CD8-positive, alpha-beta T cell (primary cell): ENCODE measurements at regions of chr4 and their contacts with region 1.

Region 1: DNA sequence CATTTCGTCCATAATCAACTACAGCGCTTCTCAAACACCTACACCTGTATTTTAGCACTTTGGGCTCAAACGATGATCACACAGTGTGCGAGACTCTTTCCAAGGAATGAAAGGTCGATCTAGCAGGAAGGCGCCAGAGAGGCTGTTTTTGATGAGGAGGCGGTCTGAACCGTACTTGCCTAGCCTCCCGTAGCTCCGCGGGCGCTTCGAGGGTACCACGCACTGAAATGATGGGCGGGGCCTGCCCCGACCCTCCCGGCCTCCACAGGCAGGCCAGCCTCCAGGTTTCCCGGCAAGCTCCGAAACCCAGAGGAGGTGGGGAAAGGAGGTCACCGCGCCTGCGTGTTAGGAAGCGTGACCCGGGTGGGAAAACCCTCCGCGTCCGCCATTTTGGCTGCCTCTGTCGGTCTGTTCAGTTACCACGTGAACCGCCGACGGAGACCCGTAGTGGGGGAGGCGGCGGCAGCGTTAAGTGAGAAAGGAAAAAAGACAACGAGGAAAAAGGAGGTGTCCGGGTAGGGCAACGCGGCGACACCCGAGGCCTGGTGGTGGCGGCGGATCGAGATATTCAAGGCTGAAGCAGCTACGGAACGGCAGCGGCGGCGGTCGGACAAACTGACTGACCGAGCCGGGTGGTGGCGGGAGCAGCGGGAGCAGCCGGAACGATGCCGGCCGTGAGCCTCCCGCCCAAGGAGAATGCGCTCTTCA is at the start of gene NAA15:
- DNase-seq: peak; percentile 94 to 99 (median 97)
- ATAC-seq: peak; percentile 89
- H3K4me3 ChIP-seq: peak within 1 kb of the TSS; percentile 90 to 94
- H3K4me3 Mint-ChIP-seq: peak within 1 kb of the TSS; percentile 99
- H3K27ac ChIP-seq: peak within 1 kb of the TSS; percentile 75 to 96
- H3K27ac Mint-ChIP-seq: peak within 1 kb of the TSS; percentile 98
- H3K4me1 ChIP-seq: peaks cover 28% of the 10 kb centered on the region
- H3K4me1 Mint-ChIP-seq: peaks cover 60% of the 10 kb centered on the region
- H3K27me3 ChIP-seq: no peaks in the 10 kb centered on the region
- H3K27me3 Mint-ChIP-seq: no peaks in the 10 kb centered on the region
- CTCF ChIP-seq: no peak
- total RNA-seq, gene NAA15: 55.8 to 59.0 TPM

Region 2: DNA sequence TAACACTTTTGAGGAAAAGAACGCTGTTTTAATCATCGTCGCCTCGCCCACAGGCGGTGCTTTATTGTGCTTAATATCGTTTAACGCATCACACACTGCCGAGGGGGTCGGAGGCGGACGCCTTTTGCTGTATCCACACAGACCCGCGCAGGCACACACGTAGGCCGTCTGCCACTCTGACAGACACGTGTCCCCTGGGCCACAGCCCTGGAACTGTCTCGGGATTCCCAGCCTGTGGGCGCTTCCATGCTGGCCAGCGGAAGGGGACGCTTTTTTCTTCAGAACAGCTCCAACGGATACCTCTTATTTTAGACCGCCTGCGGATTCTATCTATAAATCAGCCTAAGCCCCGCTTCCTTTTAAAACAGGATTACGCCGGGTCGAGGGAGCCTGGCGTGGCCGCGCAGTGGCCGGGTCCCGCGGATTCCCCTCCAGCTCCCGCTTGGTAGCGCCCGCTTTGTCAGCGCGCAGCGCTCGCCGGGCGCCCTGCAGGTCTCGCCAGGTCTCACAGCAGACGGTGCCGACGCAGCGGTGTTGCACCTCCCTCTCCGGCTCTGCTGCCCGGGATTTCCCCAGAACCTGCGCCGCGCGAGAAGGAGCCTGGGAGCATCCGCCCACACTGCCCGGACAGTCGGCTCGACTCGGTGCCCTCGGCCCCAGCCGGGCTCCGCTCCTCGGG is 285.9 kb before region 1 on chr4 and contains the start of gene NOCT:
- CTCF ChIA-PET with region 1: interaction called, 3 read pairs
- POLR2A ChIA-PET with region 1: interaction called, 4 read pairs
- intact Hi-C with region 1: loop called (anchors 1 kb)
- DNase-seq: peak; percentile 76 to 98 (median 90)
- ATAC-seq: peak; percentile 86
- H3K4me3 ChIP-seq: peak within 1 kb of the TSS; percentile 52 to 67
- H3K4me3 Mint-ChIP-seq: peak within 1 kb of the TSS; percentile 91
- H3K27ac ChIP-seq: peak within 1 kb of the TSS; percentile 75 to 92
- H3K27ac Mint-ChIP-seq: peak within 1 kb of the TSS; percentile 99
- H3K4me1 ChIP-seq: peaks cover 7% of the 10 kb centered on the region
- H3K4me1 Mint-ChIP-seq: peaks cover 30% of the 10 kb centered on the region
- H3K27me3 ChIP-seq: no peaks in the 10 kb centered on the region
- H3K27me3 Mint-ChIP-seq: no peaks in the 10 kb centered on the region
- CTCF ChIP-seq: no peak
- total RNA-seq, gene NOCT: 45.7 to 49.6 TPM

Region 3: GRCh38 chr4:139312552-139313332 is 11.5 kb after region 1 on chr4:
- CTCF ChIA-PET with region 1: interaction called, 12 read pairs
- POLR2A ChIA-PET with region 1: interaction called, 10 read pairs
- intact Hi-C with region 1: no loop called
- DNase-seq: no peak
- ATAC-seq: no peak
- H3K4me3 ChIP-seq: no peak overlapping the region
- H3K4me3 Mint-ChIP-seq: no peak overlapping the region
- H3K27ac ChIP-seq: no peak overlapping the region
- H3K27ac Mint-ChIP-seq: peak overlapping the region; percentile 75
- H3K4me1 ChIP-seq: peaks cover 33% of the 10 kb centered on the region
- H3K4me1 Mint-ChIP-seq: peaks cover 76% of the 10 kb centered on the region
- H3K27me3 ChIP-seq: no peaks in the 10 kb centered on the region
- H3K27me3 Mint-ChIP-seq: no peaks in the 10 kb centered on the region
- CTCF ChIP-seq: no peak

Region 4: DNA sequence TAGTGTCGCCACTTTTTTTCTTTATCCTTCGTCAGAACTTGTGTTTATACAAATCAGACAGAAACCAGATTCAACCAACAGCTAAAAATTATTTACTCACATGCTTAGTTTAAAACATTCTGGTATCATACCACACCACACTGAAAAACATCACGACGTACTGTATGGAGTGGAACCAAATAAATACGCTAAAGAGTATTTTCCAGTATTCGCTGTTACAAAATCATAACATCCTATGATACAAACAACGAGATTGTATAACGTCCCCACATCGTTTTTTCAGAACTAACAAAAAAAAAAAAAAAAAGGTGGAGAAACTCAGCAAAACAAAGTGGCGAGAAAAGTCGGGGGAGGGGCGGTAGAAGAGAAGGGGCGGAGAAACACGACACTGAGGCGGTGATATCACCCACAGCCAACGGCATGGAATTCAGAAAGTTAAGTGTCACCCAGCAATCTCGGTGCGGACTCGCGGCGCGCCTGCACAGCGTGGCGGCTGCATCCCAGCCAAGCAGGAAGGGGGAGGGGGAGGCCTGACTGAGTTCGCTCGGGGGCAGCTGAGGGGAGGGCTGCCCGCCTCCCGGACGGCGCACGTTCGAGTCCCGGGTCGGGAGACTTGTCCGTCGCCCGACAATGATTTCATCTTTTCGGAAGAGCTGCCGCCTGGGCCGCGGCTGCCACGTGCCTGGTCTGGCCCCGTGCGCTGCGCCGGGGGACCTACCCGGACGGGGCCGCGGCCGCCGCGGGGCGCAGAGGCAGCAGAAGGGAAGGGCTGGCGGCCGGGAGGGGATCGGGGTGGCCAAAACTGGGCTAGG is 253.8 kb after region 1 on chr4:
- CTCF ChIA-PET with region 1: no interaction called
- POLR2A ChIA-PET with region 1: interaction called, 6 read pairs
- intact Hi-C with region 1: loop called (anchors 5 kb)
- DNase-seq: peak; percentile 43 to 89 (median 74)
- ATAC-seq: peak; percentile 75
- H3K4me3 ChIP-seq: peak overlapping the region; percentile 79 to 84
- H3K4me3 Mint-ChIP-seq: peak overlapping the region; percentile 94
- H3K27ac ChIP-seq: peak overlapping the region in 1 of 2 experiments; percentile 53
- H3K27ac Mint-ChIP-seq: peak overlapping the region; percentile 95
- H3K4me1 ChIP-seq: peaks cover 9% of the 10 kb centered on the region
- H3K4me1 Mint-ChIP-seq: peaks cover 31% of the 10 kb centered on the region
- H3K27me3 ChIP-seq: peaks cover 0 to 9% of the 10 kb centered on the region in 2 experiments
- H3K27me3 Mint-ChIP-seq: peaks cover 9% of the 10 kb centered on the region
- CTCF ChIP-seq: no peak